ENCODE measurements at regions of chr13 and their contacts with region 1.

Region 1: DNA sequence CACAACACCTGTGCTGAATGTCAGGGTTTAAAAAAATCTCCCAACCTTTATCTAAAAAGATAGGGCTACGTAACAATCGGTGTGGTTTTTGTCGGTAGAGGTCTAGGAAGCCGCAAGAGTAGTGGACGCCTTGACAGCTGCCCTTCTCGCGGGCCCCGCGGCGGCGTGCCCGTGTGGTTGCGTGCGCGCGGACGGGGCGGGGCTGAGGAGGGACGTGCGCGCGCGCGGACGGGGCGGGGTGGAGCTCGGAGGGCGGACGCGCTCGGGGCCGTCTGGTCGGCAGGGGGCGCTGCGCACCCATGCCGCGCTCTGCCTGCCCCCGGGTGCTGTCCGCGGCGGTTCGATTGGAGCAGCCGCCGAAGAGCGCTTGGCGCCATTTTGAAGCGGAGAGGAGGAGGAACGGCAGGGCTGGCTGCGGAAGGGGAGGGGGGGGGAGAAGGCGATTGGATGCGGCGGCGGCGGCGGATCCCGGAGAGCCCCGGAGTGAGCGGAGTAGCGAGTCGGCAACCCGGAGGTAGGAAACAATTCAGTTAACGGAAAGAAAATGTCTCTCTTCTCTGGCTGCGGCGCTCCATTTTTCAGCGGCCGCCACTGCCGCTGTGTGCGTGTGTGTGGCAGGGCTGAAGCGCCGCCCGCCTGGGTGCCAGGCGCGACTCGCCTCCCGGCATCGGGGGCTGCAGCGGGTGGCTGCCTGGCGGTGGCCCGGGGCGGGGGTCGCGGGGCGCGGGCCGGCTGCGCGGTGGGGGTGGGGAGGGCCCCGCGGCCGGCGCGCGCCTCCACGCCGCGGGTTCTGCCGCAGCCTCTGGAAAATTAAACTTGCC is at the start of gene PDS5B:
- DNase-seq: peak; percentile 46
- H3K4me3 ChIP-seq: peak within 1 kb of the TSS; percentile 82
- H3K27me3 ChIP-seq: no peaks in the 10 kb centered on the region; the same call in 1 of the 2 replicates
- CTCF ChIP-seq: peak; percentile 53
- polyA plus RNA-seq, gene PDS5B: 3.9 and 9.2 TPM in 2 replicates

Region 2: GRCh38 chr13:31638577-31638976 is 947.7 kb before region 1 on chr13:
- CTCF ChIA-PET with region 1: no interaction called
- POLR2A ChIA-PET with region 1: no interaction called
- DNase-seq: peak; percentile 51
- H3K4me3 ChIP-seq: no peak overlapping the region
- H3K27me3 ChIP-seq: no peaks in the 10 kb centered on the region
- CTCF ChIP-seq: no peak

Region 3: DNA sequence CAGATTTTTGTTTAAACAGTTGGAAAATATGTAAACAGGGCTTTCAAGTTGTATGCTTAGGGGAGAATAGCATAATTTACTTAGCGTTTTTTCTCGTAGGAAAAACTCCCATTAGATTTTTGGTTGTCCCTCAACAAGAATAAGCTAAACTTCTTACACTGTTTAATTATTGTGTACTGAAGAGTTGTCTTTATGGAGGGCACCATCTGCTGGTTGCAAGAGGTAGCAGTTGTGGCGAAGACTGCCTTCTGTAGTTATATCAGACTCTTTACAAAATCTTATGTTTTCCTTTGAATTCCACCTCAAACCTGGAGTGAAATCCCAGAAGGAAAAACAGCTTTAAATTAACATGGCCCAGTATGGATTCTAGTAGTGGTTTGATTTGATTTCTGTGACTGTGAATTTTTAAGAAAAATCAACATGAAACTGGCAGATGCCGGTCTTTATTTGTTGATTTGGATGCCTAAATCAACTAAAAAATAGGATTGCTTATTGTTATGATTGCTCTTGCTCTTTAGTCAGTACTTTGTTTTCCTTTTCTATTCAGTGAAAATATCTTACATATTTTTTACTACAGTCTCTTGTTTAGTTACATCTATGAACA is 53.3 kb after region 1 on chr13:
- CTCF ChIA-PET with region 1: interaction called, 21 read pairs
- POLR2A ChIA-PET with region 1: no interaction called
- DNase-seq: no peak
- H3K4me3 ChIP-seq: no peak overlapping the region
- H3K27me3 ChIP-seq: no peaks in the 10 kb centered on the region
- CTCF ChIP-seq: peak; percentile 84

Measured in BJ (cell line).